Sciatic nerve (tissue), 2 donors: ENCODE measurements at regions of chr18 and their contacts with region 1.

Region 1: GRCh38 chr18:44781886-44782285 is 101.2 kb downstream of the SETBP1 start:
- DNase-seq: no peak
- ATAC-seq: peak; percentile 42

Region 2: DNA sequence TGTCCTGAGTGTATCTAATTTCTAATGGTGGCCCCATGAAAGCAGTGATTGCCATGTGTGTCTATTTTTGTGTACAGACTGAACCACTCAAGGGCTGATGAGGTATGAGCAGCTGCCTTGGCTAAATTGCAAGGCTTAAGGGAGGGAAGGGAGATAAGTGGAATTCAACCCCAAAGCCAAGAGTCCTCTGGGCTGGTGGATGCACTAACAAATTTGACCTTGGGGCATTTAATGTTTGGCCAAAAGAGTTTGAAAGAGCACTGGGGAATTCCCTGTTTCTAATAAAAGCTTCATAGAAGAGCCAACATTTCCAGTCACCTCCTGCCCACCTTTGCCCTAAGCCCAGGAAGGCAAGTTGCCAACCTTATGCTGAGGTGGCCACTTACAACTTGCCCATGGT is 70.9 kb after region 1 on chr18:
- intact Hi-C with region 1: loop called (anchors 5 kb)
- DNase-seq: no peak
- ATAC-seq: peak; percentile 64